ENCODE measurements at regions of chr19 and their contacts with region 1.

Region 1: GRCh38 chr19:4471403-4472173 is 509 bp upstream of the HDGFL2 start:
- DNase-seq: peak; percentile 100
- H3K4me3 Mint-ChIP-seq: no peak overlapping the region
- H3K27ac Mint-ChIP-seq: no peak overlapping the region
- H3K4me1 Mint-ChIP-seq: peaks cover 18% of the 10 kb centered on the region
- H3K27me3 Mint-ChIP-seq: no peaks in the 10 kb centered on the region
- CTCF ChIP-seq: no peak

Region 2: GRCh38 chr19:4457654-4458395 is 13.8 kb before region 1 on chr19 and contains the start of gene UBXN6:
- CTCF ChIA-PET with region 1: interaction called, 5 read pairs
- POLR2A ChIA-PET with region 1: interaction called, 67 read pairs
- intact Hi-C with region 1: no loop called
- DNase-seq: peak; percentile 97
- H3K4me3 Mint-ChIP-seq: peak within 1 kb of the TSS; percentile 86
- H3K27ac Mint-ChIP-seq: peak within 1 kb of the TSS; percentile 85
- H3K4me1 Mint-ChIP-seq: peaks cover 22% of the 10 kb centered on the region
- H3K27me3 Mint-ChIP-seq: no peaks in the 10 kb centered on the region
- CTCF ChIP-seq: no peak
- total RNA-seq, gene UBXN6: 94.8 and 110 TPM in 2 replicates

Region 3: DNA sequence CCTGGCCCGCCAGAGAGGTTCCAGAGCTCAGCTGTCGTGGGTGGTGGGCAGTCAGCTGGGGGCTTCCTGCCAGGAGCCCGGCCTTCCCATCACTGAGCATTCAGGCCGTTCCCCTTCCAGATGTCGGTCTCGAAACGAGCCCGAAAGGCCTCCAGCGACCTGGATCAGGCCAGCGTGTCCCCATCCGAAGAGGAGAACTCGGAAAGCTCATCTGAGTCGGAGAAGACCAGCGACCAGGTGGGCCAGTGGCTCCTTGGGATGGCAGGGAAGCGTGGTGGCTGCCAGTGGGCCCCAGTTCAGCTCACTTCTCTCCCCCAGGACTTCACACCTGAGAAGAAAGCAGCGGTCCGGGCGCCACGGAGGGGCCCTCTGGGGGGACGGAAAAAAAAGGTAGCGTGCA is 19.9 kb after region 1 on chr19:
- CTCF ChIA-PET with region 1: no interaction called
- POLR2A ChIA-PET with region 1: no interaction called
- intact Hi-C with region 1: no loop called
- DNase-seq: no peak
- H3K4me3 Mint-ChIP-seq: no peak overlapping the region
- H3K27ac Mint-ChIP-seq: no peak overlapping the region
- H3K4me1 Mint-ChIP-seq: no peaks in the 10 kb centered on the region
- H3K27me3 Mint-ChIP-seq: no peaks in the 10 kb centered on the region
- CTCF ChIP-seq: no peak